Aorta (tissue), 5 donors: ENCODE measurements at regions of chr11 and their contacts with region 1.

Region 1: DNA sequence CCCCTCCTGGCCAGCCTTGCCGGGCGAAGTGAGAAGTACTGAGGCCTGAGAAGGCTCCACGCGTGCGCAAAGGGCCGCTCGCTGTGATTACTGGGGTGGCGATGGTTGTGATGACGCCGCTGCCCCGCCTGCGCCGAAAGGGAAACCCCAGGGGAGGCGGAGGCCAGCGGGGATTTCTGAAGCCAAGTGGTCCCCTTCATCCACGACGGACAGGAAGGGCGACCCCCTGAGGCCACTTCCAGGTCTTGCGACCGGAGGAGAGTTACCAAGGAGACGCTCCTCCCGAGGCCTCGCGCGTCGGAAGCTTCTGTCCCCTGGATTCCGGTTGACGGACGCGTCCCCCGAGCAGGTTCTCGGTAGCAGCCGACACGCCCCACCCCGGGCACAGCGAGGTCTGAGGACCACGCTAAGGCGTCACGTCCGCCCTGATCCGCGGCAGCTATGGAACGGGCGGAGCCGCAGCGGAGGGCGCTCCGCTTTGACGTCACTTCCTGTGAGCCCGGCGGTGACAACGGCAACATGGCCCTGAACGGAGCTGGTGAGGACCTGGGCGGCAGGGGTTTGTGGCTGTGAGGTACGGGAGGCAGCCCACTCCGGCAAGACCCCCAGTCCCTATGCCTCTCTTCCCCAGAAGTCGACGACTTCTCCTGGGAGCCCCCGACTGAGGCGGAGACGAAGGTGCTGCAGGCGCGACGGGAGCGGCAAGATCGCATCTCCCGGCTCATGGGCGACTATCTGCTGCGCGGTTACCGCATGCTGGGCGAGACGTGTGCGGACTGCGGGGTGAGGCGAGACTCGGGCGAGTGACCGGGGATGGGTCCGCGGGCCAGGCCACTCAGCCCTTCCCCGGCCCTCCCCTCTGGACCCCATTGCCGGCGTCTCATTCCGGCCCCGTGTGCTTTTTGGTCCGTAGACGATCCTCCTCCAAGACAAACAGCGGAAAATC is at the start of gene ZNRD2:
- DNase-seq: peak; percentile 99
- ATAC-seq: peak; percentile 90
- H3K4me3 ChIP-seq: peak within 1 kb of the TSS; percentile 69 to 84
- H3K27ac ChIP-seq: peak within 1 kb of the TSS; percentile 20 to 87
- H3K4me1 ChIP-seq: no peaks in the 10 kb centered on the region
- H3K27me3 ChIP-seq: no peaks in the 10 kb centered on the region
- total RNA-seq, gene ZNRD2: 21.7 to 29.3 TPM

Region 2: DNA sequence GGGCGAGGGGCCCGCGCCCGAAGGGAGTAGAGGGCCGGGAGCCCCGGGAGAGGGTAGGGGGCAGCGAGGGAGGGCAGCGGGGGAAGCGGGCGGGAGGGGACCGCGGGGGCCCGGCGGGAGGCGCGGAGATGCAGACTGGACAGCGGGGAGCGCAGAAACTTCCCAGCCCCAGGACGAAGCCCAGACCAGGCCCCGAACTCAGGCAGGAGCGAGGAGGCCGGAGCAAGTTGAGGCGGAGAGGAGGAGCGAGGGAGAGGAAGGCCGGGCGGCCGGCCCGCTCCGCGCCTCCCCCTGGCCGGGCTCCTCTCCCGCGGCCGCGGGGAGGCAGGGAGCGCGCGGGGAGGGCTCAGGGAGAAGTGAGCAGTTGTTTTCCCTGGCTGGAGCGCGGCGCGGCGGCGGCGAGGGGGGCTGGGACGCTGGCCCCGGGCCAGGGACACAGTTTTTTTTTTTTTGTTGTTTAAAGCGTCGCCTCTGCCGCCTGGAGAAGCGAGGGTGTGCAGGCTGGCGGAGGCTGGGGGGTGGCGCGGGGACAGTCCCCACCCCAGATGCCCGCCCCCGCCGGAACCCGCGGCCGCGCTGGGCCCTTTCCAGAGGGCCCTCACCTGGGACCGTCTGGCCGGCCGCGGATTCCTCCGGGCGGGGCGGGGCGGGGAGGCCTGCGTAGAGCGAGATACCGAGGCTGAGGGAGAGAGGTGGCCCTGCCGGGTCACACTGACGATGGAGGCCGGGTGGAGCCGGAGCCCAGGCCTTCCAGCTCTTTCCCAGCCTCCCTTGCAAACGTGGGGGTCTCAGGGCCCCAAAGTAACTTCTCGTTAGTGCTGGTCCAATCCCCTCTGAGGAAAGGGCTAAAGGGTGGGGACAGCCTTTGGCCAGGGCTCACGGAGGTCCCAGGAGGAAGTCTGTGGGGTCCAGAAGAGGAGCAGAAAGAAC is 12.0 kb before region 1 on chr11 and contains the start of gene LTBP3:
- intact Hi-C with region 1: loop called (anchors 1 to 2 kb)
- DNase-seq: peak; percentile 91 to 94
- ATAC-seq: peak; percentile 89
- H3K4me3 ChIP-seq: peak within 1 kb of the TSS; percentile 64 to 87
- H3K27ac ChIP-seq: peak within 1 kb of the TSS; percentile 73 to 94
- H3K4me1 ChIP-seq: no peaks in the 10 kb centered on the region
- H3K27me3 ChIP-seq: no peaks in the 10 kb centered on the region
- total RNA-seq, gene LTBP3: 280 to 473 TPM

Region 3: DNA sequence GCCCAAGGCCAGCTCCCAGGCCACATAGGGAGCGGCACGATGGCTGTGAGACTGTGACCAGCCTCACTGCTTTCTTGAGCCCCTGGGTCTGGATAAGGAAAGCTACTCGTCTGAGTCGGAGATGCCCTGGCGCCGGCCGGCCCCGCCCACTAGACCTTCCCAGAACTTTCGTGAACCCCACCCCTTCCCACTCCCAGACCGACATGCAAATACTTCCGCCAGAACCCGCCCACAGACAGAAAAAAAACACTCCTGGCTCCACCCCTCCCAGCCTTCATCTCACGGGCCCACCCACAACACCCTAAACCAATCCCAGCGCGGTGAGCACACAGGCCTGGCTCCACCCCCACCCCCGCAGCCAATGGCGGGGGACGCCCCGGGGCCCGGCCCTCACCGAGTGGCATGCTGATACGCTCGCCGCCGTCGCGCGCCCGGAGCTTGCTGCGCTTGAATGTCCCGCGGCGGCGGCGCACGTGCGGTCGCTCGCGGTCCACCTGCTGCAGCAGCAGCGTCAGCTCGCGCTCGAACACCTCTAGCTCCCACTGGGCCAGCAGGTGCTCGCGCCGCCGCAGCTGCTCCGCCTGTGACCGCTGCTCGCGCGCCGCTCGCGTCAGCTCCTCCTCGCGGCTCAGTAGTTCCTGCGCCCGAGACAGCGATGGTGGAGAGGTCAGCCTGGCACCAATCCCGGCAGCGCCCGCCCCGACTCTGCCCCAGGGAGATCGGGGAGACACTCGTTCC is 36.8 kb after region 1 on chr11:
- intact Hi-C with region 1: loop called in 1 of 2 experiments (anchors 2 kb)
- DNase-seq: peak; percentile 93 to 97
- ATAC-seq: peak; percentile 96
- H3K4me3 ChIP-seq: no peak overlapping the region
- H3K27ac ChIP-seq: peak overlapping the region in 1 of 2 donors; percentile 26
- H3K4me1 ChIP-seq: peaks cover 0 to 2% of the 10 kb centered on the region in 2 donors
- H3K27me3 ChIP-seq: no peaks in the 10 kb centered on the region

Region 4: DNA sequence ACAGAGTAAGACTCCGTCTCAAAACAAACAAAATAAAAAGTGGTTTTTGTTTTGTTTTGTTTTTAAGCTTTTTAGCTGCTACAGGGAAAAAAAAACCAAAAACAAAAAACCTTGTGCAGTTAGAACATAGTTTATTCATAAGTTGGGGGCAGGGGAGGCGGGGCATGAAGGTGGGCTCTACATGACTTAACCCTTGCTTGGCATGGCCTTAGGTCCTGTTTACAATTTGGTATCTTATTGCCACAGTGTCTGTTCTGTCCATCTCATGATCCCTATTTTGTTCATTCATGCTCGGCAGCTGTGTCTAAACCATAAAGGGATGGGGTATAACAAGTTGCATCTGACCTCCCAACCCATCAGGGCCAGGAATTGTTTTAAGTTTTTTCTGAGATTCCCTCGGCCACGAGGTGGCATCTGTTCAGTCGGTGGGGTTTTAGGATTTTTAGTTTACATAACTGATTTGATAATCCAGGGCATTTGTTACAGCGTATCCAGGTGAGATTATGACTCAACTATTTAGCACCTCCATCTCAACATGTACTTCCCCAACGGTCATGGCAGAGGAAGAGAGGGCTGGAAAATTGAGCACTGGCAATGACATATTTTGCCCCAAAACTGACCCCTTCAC is 203.7 kb after region 1 on chr11:
- intact Hi-C with region 1: no loop called
- DNase-seq: no peak
- ATAC-seq: no peak
- H3K4me3 ChIP-seq: no peak overlapping the region
- H3K27ac ChIP-seq: no peak overlapping the region
- H3K4me1 ChIP-seq: no peaks in the 10 kb centered on the region
- H3K27me3 ChIP-seq: no peaks in the 10 kb centered on the region